ENCODE measurements at regions of chr1 and their contacts with region 1.

Region 1: GRCh38 chr1:29202584-29203340 is 21.1 kb upstream of the SRSF4 start:
- DNase-seq: peak; percentile 91
- H3K4me3 ChIP-seq: no peak overlapping the region
- CTCF ChIP-seq: peak; percentile 93

Region 2: DNA sequence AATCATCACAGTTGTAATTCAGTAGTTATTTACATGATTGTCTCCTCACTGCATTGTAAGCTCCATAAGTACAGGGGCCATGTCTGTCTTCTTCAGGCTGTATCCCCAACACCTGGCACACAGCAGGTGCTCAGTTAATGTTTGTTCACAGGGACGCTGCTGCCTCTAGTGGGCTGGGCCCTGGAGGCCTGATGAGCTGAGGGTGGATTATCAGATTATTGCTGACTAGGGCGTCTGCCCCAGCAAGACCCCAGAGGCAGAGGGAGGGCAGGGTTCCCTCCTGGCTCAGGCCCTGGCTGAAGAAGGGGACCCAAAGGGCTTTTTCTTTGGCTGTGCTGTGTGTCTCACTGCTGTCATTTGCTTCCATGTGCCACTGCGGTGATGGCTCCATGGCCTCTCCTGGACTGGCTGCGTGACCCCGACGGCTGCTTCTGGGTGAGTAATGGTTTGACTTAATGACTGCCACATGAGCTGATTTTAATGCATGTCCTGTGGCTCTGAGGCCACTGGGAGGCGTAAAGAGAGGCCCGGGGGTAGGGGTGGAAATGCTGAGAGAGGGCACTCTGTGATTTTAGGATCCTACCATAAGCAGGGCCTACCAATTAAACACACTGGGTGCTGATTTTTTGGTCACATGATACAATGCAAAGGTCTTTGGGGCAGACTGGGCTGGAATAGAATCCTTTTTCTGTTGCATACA is 309.2 kb before region 1 on chr1:
- CTCF ChIA-PET with region 1: interaction called, 12 read pairs
- POLR2A ChIA-PET with region 1: no interaction called
- DNase-seq: no peak
- H3K4me3 ChIP-seq: no peak overlapping the region
- CTCF ChIP-seq: peak; percentile 44

Region 3: GRCh38 chr1:29124366-29125236 is 78.2 kb before region 1 on chr1:
- CTCF ChIA-PET with region 1: interaction called, 105 read pairs
- POLR2A ChIA-PET with region 1: interaction called, 3 read pairs
- DNase-seq: no peak
- H3K4me3 ChIP-seq: peak overlapping the region; percentile 73
- CTCF ChIP-seq: peak; percentile 91

Region 4: DNA sequence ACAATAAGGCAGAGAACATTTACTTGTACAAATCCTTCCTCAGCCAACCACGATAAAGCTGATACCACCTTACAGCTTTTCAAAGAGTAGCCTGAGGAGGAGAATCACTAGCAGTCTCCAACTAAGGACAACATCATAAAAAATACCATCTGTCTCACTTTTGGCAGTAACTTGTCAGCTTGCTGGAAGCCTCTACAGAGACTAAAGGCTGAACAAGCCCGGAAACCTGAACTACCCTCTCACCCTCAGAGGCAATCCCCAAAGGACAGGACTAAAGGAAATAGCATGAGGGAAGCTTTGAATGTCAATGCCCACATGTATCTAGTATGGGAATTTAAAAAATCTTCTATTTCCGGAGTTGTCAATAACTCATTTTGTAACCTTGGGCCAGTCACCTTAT is 31.7 kb before region 1 on chr1:
- CTCF ChIA-PET with region 1: interaction called, 19 read pairs
- POLR2A ChIA-PET with region 1: no interaction called
- DNase-seq: no peak
- H3K4me3 ChIP-seq: no peak overlapping the region
- CTCF ChIP-seq: no peak